ENCODE measurements at regions of chr19 and their contacts with region 1.

Region 1: GRCh38 chr19:38263689-38264485 is 486 bp upstream of the SPINT2 start:
- DNase-seq: peak; percentile 97 to 99
- H3K4me3 ChIP-seq: peak overlapping the region; percentile 34; the same call in 1 of the 2 replicates
- H3K27ac ChIP-seq: peak overlapping the region; percentile 94
- H3K4me1 ChIP-seq: peaks cover 35% of the 10 kb centered on the region
- H3K27me3 ChIP-seq: no peaks in the 10 kb centered on the region
- CTCF ChIP-seq: no peak

Region 2: GRCh38 chr19:38277969-38278680 is 14.2 kb after region 1 on chr19:
- CTCF ChIA-PET with region 1: no interaction called
- POLR2A ChIA-PET with region 1: interaction called, 7 read pairs
- intact Hi-C with region 1: loop called (anchors 1 kb)
- DNase-seq: peak; percentile 38 to 78
- H3K4me3 ChIP-seq: peak overlapping the region; percentile 39
- H3K27ac ChIP-seq: peak overlapping the region; percentile 75
- H3K4me1 ChIP-seq: peaks cover 64% of the 10 kb centered on the region
- H3K27me3 ChIP-seq: no peaks in the 10 kb centered on the region
- CTCF ChIP-seq: no peak

Region 3: GRCh38 chr19:38290631-38291157 is 26.8 kb after region 1 on chr19:
- CTCF ChIA-PET with region 1: interaction called, 5 read pairs
- POLR2A ChIA-PET with region 1: interaction called, 4 read pairs
- intact Hi-C with region 1: loop called (anchors 1 kb)
- DNase-seq: peak; percentile 90 to 91
- H3K4me3 ChIP-seq: no peak overlapping the region; the same call in 1 of the 2 replicates
- H3K27ac ChIP-seq: peak overlapping the region; percentile 75
- H3K4me1 ChIP-seq: peaks cover 44% of the 10 kb centered on the region
- H3K27me3 ChIP-seq: no peaks in the 10 kb centered on the region
- CTCF ChIP-seq: no peak

Region 4: DNA sequence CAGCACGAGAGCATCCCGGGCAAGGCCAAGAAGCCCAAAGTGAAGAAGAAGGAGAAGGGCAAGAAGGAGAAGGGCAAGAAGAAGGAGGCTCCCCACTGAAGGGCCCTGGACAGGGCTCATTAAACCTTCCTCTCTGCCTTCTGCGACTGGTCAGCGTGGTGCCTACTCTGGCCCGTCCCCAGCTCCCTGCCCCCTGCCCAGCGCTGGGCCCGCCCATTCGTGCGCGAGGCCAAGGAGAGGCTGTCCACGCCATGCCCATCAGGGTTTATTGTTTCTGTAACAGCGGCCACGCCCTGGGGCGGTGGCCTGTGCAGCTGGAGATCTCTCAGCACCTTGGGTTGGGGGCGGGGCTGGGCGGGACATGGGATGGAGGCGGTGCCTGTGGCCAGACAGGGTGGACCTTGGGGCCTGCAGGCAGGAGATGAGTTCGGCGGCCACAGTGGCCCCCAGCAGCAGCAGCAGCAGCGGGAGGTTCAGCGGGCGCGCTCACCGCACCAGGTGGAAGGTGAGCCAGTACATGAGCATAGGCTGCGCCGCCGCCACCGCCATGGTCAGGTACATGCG is 41.1 kb after region 1 on chr19:
- CTCF ChIA-PET with region 1: no interaction called
- POLR2A ChIA-PET with region 1: interaction called, 12 read pairs
- intact Hi-C with region 1: loop called (anchors 1 kb)
- DNase-seq: peak; percentile 95 to 98
- H3K4me3 ChIP-seq: peak overlapping the region; percentile 72
- H3K27ac ChIP-seq: peak overlapping the region; percentile 94
- H3K4me1 ChIP-seq: peaks cover 33% of the 10 kb centered on the region
- H3K27me3 ChIP-seq: no peaks in the 10 kb centered on the region
- CTCF ChIP-seq: no peak

Region 5: DNA sequence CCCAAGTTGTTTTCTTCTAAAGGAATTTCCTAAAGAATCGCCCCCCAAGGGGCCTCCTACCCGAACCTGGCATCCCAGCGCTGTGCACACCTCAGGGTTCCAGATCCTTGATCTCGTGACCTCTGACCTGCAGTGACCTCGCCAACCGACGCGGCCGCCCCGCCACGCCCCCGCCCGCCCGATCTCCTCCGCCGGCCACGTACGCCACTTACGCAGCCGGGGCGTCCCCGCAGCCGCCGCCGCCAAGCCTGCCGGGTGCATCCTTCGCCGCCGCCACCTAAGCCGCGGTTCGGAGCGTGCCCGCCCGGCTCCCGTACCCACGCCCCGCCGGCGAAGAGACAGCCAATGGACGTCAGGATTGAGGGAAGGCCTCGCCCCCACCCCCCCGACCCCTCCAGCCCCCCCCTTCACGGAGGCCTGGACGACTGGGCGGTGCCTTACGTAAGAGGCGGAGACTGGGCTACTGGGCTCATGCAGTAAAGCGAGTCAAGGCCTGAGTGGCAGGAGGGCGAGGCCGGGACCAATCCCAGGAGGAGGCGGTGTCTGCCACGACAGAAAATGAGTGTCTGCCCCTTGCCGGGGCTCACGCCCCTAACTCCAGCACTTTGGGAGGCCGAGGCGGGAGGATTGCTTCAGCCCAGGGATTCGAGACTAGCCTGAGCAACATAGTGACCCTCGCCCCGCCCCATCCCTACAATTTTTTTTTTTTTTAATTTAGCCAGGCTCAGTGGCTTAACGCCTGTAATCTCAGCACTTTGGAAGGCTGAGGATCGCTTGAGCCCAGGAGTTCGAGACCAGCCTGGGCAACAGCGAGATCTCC is 52.0 kb after region 1 on chr19 and contains the start of gene YIF1B:
- CTCF ChIA-PET with region 1: no interaction called
- POLR2A ChIA-PET with region 1: interaction called, 11 read pairs
- intact Hi-C with region 1: loop called (anchors 1 kb)
- DNase-seq: peak; percentile 94 to 96
- H3K4me3 ChIP-seq: peak within 1 kb of the TSS; percentile 60
- H3K27ac ChIP-seq: peak within 1 kb of the TSS; percentile 67
- H3K4me1 ChIP-seq: peaks cover 21% of the 10 kb centered on the region; the same call in 1 of the 2 replicates
- H3K27me3 ChIP-seq: peaks cover 16% of the 10 kb centered on the region
- CTCF ChIP-seq: no peak
- total RNA-seq, gene YIF1B: 33.6 and 39.8 TPM in 2 replicates

Measured in PC-9 (cell line).